CD14-positive monocyte (primary cell): ENCODE measurements at regions of chr2 and their contacts with region 1.

Region 1: GRCh38 chr2:230007931-230008707 is 60.6 kb downstream of the SLC16A14 start:
- DNase-seq: peak; percentile 44 to 62 (median 59)
- H3K4me3 ChIP-seq: no peak overlapping the region
- H3K4me3 Mint-ChIP-seq: peak overlapping the region in 1 of 2 donors; percentile 57
- H3K27ac ChIP-seq: no peak overlapping the region
- H3K27ac Mint-ChIP-seq: peak overlapping the region in 1 of 7 donors; percentile 46
- H3K4me1 ChIP-seq: no peaks in the 10 kb centered on the region
- H3K4me1 Mint-ChIP-seq: peaks cover 8% of the 10 kb centered on the region
- H3K27me3 ChIP-seq: no peaks in the 10 kb centered on the region
- H3K27me3 Mint-ChIP-seq: no peaks in the 10 kb centered on the region
- CTCF ChIP-seq: peak; percentile 92

Region 2: DNA sequence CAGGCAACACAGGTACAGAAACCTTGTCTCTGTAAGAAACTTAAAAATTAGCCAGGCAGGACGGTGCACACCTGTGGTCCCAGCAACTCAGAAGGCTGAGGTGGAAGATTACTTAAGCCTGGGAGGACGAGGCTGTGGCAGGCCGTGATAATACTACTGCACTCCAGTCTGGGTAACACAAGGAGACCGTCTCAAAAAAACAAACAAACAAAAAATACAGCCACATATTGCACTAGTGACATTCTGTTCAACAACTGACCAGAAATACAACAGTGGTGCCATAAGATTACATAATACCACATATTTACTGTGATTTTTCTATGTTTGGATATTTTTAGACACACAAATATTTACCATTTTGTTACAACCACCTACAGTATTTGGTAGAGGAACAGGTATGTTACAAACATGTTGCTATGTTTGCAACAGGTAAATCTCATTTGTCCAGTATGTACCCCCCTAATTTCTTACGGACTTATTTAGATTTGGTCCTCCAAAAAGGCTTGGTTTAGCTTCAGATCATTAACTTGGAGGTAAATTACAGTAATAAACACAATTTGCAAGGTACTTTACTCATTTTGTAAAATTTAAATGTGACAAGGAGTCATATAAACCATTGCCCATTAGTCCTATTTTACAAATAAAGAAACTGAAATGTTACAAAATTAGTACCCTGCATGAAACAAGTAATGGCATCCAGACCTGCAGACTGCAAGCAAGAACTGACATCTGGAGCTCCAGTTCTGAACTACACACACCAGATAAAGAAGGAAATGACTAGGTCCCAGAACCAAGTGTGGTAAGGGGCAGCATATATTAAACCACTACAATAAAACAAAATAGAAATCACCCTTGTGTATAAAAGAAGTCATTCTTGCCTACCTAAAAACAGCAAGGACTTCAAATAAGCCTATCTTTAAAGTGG is 123.1 kb before region 1 on chr2:
- intact Hi-C with region 1: no loop called
- DNase-seq: no peak
- H3K4me3 ChIP-seq: no peak overlapping the region
- H3K4me3 Mint-ChIP-seq: no peak overlapping the region
- H3K27ac ChIP-seq: no peak overlapping the region
- H3K27ac Mint-ChIP-seq: peak overlapping the region in 3 of 7 donors; percentile 21 to 75 (median 64)
- H3K4me1 ChIP-seq: no peaks in the 10 kb centered on the region
- H3K4me1 Mint-ChIP-seq: peaks cover 3% of the 10 kb centered on the region
- H3K27me3 ChIP-seq: no peaks in the 10 kb centered on the region
- H3K27me3 Mint-ChIP-seq: no peaks in the 10 kb centered on the region
- CTCF ChIP-seq: no peak

Region 3: DNA sequence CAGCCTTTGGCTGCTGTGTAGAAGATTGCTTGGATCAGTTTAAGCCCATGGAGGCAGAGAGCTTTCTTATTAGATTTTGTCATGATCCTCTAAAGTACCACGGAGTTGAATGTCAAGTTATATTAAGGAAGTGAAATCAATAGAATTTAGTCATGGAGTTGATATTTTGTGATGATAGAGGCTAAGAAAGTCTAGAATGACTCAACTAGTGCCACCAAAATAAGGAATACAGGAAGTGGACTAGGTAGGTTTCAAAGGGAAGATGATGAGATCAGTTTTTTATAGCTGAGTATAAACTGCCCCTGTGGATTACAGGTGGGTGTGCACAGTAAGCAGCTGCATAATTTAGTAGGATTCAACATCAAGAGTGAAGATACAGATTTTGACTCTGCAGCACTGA is 60.6 kb before region 1 on chr2:
- intact Hi-C with region 1: no loop called
- DNase-seq: no peak
- H3K4me3 ChIP-seq: no peak overlapping the region
- H3K4me3 Mint-ChIP-seq: no peak overlapping the region
- H3K27ac ChIP-seq: no peak overlapping the region
- H3K27ac Mint-ChIP-seq: no peak overlapping the region
- H3K4me1 ChIP-seq: no peaks in the 10 kb centered on the region
- H3K4me1 Mint-ChIP-seq: peaks cover 4% of the 10 kb centered on the region
- H3K27me3 ChIP-seq: no peaks in the 10 kb centered on the region
- H3K27me3 Mint-ChIP-seq: peaks cover 0 to 1% (median 0%) of the 10 kb centered on the region in 3 donors
- CTCF ChIP-seq: no peak

Region 4: DNA sequence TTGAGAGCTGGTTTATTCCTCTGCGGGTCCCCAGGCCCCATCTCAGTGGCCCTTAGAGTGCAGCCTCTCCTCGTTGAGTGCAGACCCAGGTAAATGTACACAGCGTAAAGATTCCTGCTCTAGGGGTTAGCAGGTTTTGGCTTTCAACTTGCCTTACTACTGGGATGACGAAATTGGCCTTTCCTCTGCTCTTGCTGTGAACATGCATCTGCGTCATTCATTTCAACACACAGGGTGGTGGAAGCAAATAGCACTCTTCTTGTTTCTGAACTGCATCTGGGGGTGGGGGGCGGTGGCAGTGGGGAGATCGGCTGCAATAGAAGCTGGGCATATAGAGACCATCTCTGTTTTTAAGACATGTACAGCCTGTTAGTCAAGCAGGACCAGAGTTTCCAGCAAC is 77.1 kb after region 1 on chr2:
- intact Hi-C with region 1: no loop called
- DNase-seq: peak in 1 of 3 donors; percentile 10
- H3K4me3 ChIP-seq: no peak overlapping the region
- H3K4me3 Mint-ChIP-seq: no peak overlapping the region
- H3K27ac ChIP-seq: no peak overlapping the region
- H3K27ac Mint-ChIP-seq: peak overlapping the region in 1 of 7 donors; percentile 10
- H3K4me1 ChIP-seq: no peaks in the 10 kb centered on the region
- H3K4me1 Mint-ChIP-seq: peaks cover 8% of the 10 kb centered on the region
- H3K27me3 ChIP-seq: no peaks in the 10 kb centered on the region
- H3K27me3 Mint-ChIP-seq: peaks cover 0 to 4% (median 0%) of the 10 kb centered on the region in 3 donors
- CTCF ChIP-seq: no peak

Region 5: DNA sequence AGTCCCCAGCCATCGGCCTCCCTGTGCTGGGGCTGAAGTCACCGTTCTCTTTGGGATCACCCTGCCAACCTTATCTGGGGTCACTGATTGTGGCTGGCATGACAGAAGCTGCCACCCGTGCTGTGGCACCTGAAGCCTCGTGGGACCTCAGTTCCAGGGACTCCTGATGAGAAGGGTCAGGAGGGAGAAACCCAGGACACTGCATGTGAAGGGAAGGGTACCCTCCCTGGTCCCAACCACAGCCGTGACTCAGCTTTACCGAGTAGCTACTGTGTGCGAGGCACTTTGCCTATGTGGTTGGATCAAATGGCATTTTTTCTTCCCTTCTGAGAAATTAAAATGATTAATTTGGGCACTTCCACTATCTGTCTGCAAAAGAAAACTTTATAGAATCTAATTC is 147.2 kb after region 1 on chr2:
- intact Hi-C with region 1: loop called (anchors 2 to 5 kb)
- DNase-seq: no peak
- H3K4me3 ChIP-seq: no peak overlapping the region
- H3K4me3 Mint-ChIP-seq: no peak overlapping the region
- H3K27ac ChIP-seq: no peak overlapping the region
- H3K27ac Mint-ChIP-seq: no peak overlapping the region
- H3K4me1 ChIP-seq: peaks cover 7 to 13% of the 10 kb centered on the region in 2 donors
- H3K4me1 Mint-ChIP-seq: peaks cover 19% of the 10 kb centered on the region
- H3K27me3 ChIP-seq: no peaks in the 10 kb centered on the region
- H3K27me3 Mint-ChIP-seq: peaks cover 0 to 5% (median 2%) of the 10 kb centered on the region in 3 donors
- CTCF ChIP-seq: no peak

Region 6: DNA sequence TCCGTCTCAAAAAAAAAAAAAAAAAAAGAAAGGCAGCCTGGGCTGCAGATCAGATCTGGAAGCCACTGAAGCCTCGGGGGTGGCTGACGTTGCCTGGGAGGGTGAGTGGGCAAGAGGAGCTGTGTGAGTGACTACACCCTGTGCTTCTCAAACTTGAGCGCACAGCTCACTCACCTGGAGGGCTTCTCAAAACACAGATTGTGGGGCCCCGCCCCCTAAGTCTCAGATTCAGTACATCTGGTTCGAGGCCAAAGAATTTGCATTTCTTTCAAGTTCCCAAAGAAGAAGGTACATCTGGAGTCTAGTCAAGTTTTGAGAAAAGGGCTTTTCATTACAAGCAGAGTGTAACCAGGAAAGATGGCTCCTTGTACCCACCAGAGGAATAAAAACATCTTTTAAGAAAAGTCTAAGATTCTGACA is 606.8 kb after region 1 on chr2:
- intact Hi-C with region 1: loop called (anchors 2 kb)
- DNase-seq: no peak
- H3K4me3 ChIP-seq: no peak overlapping the region
- H3K4me3 Mint-ChIP-seq: no peak overlapping the region
- H3K27ac ChIP-seq: no peak overlapping the region
- H3K27ac Mint-ChIP-seq: no peak overlapping the region
- H3K4me1 ChIP-seq: no peaks in the 10 kb centered on the region
- H3K4me1 Mint-ChIP-seq: peaks cover 7% of the 10 kb centered on the region
- H3K27me3 ChIP-seq: no peaks in the 10 kb centered on the region
- H3K27me3 Mint-ChIP-seq: peaks cover 0 to 3% (median 0%) of the 10 kb centered on the region in 3 donors
- CTCF ChIP-seq: no peak